GM12878 (cell line): ENCODE measurements at regions of chr3 and their contacts with region 1.

Region 1: DNA sequence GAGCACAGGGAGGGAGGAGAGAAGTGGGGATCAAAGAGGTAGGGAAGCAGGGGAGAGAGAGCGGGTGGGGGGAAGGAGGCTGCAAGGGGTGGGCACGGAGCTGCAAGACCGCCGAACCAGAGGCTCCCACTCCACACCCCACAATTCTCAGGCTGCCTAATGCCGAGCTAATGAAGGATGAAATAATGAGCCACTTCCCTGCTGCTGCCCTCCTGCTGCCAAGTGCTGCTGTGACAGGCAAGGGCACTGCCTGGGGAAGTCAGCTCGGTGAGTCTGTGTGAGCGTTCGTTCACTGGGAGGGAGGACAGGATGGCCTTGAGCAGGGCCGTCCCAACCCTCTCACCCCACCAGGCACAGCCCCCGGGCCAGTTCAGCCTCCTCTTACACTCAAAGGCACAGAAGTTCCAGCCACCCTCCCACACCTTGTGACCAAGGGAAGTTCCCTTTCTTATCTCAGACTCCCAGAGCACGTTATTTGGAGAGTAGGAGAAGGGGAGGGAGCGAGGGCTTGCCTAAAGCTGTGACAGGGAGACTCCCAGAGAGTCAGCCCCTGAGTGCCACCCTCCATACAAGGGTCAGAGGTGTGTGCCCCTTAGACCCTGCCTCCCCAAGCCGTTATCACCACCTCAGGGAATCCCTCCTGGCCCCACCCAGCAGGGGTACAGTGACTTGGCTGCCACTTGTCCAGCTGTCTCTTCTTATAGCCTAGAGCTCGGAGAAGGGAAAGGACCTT is 12.4 kb downstream of the GLYCTK start:
- DNase-seq: no peak
- ATAC-seq: peak; percentile 80
- H3K4me3 ChIP-seq: no peak overlapping the region
- H3K27ac ChIP-seq: 0 out of 2 replicates have a peak overlapping the region, but pooled peaks have one; percentile 24
- H3K4me1 ChIP-seq: peaks cover 12% of the 10 kb centered on the region
- H3K27me3 ChIP-seq: no peaks in the 10 kb centered on the region
- CTCF ChIP-seq: peak in 2 of 3 experiments; percentile 10 to 29; a peak in 3 of 6 replicates
- EP300 ChIP-seq: no peak
- POLR2A ChIP-seq: peak; percentile 65
- RAD21 ChIP-seq: no peak

Region 2: DNA sequence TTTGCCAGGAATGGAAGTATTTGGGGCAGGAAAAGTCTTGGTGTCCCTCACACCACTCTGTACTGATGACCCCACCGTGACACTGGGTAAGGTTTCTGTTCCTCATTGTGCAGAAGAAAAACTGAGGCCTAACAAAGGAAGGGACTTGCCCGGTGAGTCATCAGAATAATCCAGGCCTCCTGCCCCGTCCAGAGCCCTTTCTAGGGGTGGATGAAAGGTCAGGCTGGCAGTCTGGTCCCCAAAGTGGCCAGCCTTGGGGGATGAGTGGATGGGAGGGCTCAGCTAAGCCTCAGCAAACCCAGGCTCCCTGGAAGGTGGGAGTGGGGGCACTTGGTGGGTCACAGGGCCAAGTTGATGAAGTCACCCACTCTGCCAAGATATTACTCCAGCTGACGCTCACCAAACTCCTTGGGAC is 13.7 kb after region 1 on chr3:
- CTCF ChIA-PET with region 1: interaction called, 19 read pairs
- POLR2A ChIA-PET with region 1: interaction called, 29 read pairs
- RAD21 ChIA-PET with region 1: interaction called, 5 read pairs
- SMC1A ChIA-PET with region 1: interaction called, 12 read pairs
- in situ Hi-C with region 1: no loop called
- intact Hi-C with region 1: no loop called
- DNase-seq: peak; percentile 61
- ATAC-seq: peak; percentile 92
- H3K4me3 ChIP-seq: peak overlapping the region; percentile 59
- H3K27ac ChIP-seq: peak overlapping the region; percentile 97
- H3K4me1 ChIP-seq: peaks cover 58% of the 10 kb centered on the region
- H3K27me3 ChIP-seq: no peaks in the 10 kb centered on the region
- CTCF ChIP-seq: no peak
- EP300 ChIP-seq: peak; percentile 91 to 98
- POLR2A ChIP-seq: peak; percentile 62; the same call in 1 of the 2 replicates
- RAD21 ChIP-seq: no peak

Region 3: GRCh38 chr3:52552089-52552488 is 252.0 kb after region 1 on chr3:
- CTCF ChIA-PET with region 1: no interaction called
- POLR2A ChIA-PET with region 1: no interaction called
- RAD21 ChIA-PET with region 1: no interaction called
- SMC1A ChIA-PET with region 1: no interaction called
- in situ Hi-C with region 1: no loop called
- intact Hi-C with region 1: no loop called
- DNase-seq: no peak
- ATAC-seq: no peak
- H3K4me3 ChIP-seq: no peak overlapping the region
- H3K27ac ChIP-seq: no peak overlapping the region
- H3K4me1 ChIP-seq: no peaks in the 10 kb centered on the region
- H3K27me3 ChIP-seq: no peaks in the 10 kb centered on the region
- CTCF ChIP-seq: no peak
- EP300 ChIP-seq: no peak
- POLR2A ChIP-seq: no peak
- RAD21 ChIP-seq: no peak